Activated B cell treated with CpG ODN at 0.5 μM for 24 hours (primary cell): ENCODE measurements at regions of chr7 and their contacts with region 1.

Region 1: DNA sequence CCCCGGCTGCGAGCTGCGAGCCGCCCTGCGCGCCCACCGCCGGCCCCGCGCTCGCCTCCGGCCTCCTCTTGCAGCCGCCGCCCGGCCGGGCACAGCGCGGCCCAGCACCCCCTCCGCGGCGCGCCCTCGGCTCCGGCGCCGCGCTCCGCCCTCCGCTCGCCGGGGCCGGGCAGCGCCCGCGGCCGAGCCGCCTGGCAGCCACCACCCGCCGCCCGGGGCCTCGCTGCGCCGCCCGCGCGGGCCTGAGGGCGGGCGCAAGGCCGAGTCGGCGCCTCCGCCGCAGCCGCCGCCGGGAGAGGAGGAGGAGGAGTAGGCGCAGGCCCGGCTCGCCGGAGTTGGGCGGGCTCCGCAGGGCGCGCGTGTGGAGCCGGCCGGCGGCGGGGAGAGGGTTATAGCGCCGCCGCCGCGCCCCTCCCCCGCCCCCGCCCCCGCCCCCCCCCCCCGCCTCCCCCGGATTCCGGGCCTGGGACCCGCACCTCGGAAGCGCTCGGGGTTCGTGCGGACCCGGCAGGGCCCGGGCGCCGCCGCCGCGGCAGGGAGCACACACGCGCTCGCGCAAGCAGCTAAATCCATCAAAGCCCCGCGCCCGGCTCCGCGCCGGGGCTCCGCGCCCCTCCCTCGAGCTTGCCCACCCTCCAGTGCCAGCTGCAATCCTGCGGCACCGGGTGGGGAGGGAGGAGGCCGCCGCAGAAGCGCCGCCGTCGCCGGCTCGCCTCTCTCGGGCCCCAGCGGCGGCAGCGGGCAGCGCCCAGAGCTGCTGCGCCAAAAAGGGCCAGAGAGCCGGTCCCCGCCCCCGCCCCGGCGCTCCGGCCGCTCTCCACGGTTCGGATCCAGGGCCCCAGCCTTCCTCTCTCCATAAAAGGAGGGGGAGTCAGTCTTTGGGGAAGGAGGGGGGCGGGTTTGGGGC is at the start of gene PDGFA:
- DNase-seq: peak; percentile 47
- ATAC-seq: peak; percentile 15
- H3K4me3 Mint-ChIP-seq: peak within 1 kb of the TSS; percentile 82
- H3K27ac Mint-ChIP-seq: no peak within 1 kb of the TSS
- H3K4me1 Mint-ChIP-seq: peaks cover 30% of the 10 kb centered on the region
- H3K27me3 Mint-ChIP-seq: peaks cover 8% of the 10 kb centered on the region
- CTCF ChIP-seq: no peak
- total RNA-seq, gene PDGFA: 6.0 and 7.3 TPM in 2 replicates

Region 2: DNA sequence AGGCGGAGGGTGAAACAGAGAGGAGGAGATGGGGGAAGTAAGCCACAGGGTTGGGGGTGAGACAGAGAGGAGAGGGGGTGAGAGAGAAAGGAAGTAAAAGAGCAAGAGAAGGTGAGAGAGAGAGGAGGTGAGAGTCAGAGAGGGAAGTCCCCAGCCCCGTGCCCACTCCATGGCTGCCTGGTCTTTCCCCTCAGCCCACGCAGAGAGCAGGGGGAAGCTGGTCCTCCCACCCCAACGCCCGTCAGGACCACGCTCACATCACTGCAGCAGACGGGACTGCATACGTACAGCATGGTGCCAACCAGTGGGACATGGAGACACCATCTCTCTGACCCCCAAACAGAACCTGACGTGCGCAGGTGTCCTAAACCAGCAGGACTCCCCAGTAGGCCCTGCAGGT is 12.0 kb after region 1 on chr7:
- CTCF ChIA-PET with region 1: no interaction called
- POLR2A ChIA-PET with region 1: no interaction called
- intact Hi-C with region 1: no loop called
- DNase-seq: no peak
- ATAC-seq: peak; percentile 49
- H3K4me3 Mint-ChIP-seq: no peak overlapping the region
- H3K27ac Mint-ChIP-seq: no peak overlapping the region
- H3K4me1 Mint-ChIP-seq: peaks cover 9% of the 10 kb centered on the region
- H3K27me3 Mint-ChIP-seq: no peaks in the 10 kb centered on the region
- CTCF ChIP-seq: no peak

Region 3: GRCh38 chr7:726084-726853 is 206.5 kb after region 1 on chr7 and contains the start of gene DNAAF5:
- CTCF ChIA-PET with region 1: no interaction called
- POLR2A ChIA-PET with region 1: no interaction called
- intact Hi-C with region 1: loop called (anchors 1 kb)
- DNase-seq: peak; percentile 87
- ATAC-seq: peak; percentile 89
- H3K4me3 Mint-ChIP-seq: peak within 1 kb of the TSS; percentile 83
- H3K27ac Mint-ChIP-seq: peak within 1 kb of the TSS; percentile 65
- H3K4me1 Mint-ChIP-seq: peaks cover 22% of the 10 kb centered on the region
- H3K27me3 Mint-ChIP-seq: no peaks in the 10 kb centered on the region
- CTCF ChIP-seq: no peak
- total RNA-seq, gene DNAAF5: 23.5 and 25.9 TPM in 2 replicates

Region 4: DNA sequence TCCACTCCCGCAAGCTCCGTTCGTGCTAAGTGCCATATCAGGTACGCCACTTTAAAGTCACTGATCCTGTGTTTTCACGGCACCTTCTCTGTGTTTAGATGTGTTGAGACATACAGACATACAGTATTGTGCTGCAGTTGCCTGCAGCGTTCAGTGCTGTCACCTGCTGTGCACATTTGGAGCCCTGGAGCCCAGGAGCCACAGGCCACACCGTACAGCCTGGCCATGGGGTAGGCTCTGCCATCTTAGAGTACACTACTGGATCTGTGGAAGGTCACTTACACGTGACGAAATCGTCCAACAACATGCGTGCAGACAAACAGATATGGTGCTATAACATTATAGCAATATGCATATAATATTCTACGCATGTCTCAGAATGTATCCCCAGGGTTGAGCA is 1261.6 kb after region 1 on chr7:
- CTCF ChIA-PET with region 1: no interaction called
- POLR2A ChIA-PET with region 1: no interaction called
- intact Hi-C with region 1: no loop called
- DNase-seq: no peak
- ATAC-seq: no peak
- H3K4me3 Mint-ChIP-seq: no peak overlapping the region
- H3K27ac Mint-ChIP-seq: no peak overlapping the region
- H3K4me1 Mint-ChIP-seq: no peaks in the 10 kb centered on the region
- H3K27me3 Mint-ChIP-seq: peaks cover 22% of the 10 kb centered on the region
- CTCF ChIP-seq: no peak